ENCODE measurements at regions of chr15 and their contacts with region 1.

Region 1: GRCh38 chr15:52018693-52019387 is at the start of gene MAPK6:
- DNase-seq: peak; percentile 91
- H3K4me3 ChIP-seq: peak within 1 kb of the TSS; percentile 57 to 80 (median 76)
- H3K27ac ChIP-seq: peak within 1 kb of the TSS; percentile 99
- H3K4me1 ChIP-seq: peaks cover 16% of the 10 kb centered on the region
- H3K27me3 ChIP-seq: no peaks in the 10 kb centered on the region
- CTCF ChIP-seq: no peak
- total RNA-seq, gene MAPK6: 99.9 to 105 TPM

Region 2: DNA sequence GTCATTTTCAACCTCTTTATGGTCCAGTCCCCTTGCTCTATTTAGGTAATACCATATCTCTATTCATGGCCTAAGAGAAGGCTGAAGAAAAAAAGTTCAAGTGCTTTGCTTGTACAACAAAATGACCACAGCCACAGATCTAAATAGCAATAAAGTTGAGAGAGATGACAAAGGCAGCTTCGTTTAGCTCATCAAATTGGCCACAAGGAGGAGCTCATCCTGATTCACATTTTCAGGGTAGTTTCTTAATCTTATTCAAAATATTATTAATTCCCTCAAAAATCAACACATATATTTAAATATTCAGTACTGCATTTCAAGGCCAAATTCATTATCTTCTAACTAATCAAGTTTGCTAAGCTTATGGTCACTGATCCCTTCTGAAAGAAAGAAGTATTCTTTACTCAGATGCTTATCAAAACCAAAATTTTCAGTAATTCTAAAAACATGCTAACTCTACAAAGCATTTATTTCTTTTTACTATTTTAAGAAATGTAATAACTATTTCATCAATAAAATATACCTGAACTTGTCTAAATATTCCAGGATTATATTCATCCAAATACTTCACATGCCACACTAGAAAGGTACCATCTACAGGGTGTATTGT is 481.8 kb before region 1 on chr15:
- CTCF ChIA-PET with region 1: interaction called, 18 read pairs
- dilution Hi-C with region 1: no loop called
- in situ Hi-C with region 1: no loop called
- intact Hi-C with region 1: no loop called
- DNase-seq: no peak
- H3K4me3 ChIP-seq: no peak overlapping the region
- H3K27ac ChIP-seq: no peak overlapping the region
- H3K4me1 ChIP-seq: no peaks in the 10 kb centered on the region
- H3K27me3 ChIP-seq: no peaks in the 10 kb centered on the region
- CTCF ChIP-seq: peak; percentile 67 to 78

Region 3: DNA sequence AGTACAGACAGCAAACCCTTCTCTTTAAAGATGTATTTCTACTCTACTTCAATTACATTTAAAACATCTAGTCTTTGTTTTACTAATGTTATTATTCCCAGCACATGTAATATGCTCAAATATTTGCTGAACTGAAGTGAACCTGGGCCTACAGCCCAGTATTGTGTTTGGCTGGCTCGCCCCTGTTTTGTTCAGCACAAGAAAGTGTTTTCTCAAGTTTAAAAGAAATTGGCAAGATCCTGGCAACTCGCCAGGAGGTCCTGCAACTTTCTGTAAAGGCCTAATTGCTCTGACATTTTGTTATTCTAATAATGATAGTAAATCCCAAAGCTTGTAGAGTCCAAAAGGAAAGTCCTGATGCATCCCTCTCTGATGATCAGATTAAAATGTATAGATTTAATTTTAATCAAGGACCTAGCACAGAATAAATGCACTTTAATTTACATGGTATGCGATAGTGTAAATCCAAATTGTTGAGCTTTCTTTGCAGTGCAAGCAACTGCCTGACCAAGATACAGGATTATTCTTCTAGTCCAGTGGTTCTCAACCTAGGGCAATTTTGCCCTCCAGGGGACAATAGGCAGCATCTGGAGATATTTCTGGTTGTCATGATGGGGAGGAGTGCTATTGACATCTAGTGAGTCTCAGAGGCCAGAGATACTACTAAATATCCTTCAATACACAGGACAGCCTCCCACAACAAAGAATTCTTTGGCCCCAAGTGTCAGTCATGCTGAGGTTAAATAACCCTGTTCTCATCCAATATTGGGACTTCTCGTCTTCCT is 225.1 kb before region 1 on chr15:
- CTCF ChIA-PET with region 1: no interaction called
- dilution Hi-C with region 1: no loop called
- in situ Hi-C with region 1: no loop called
- intact Hi-C with region 1: no loop called
- DNase-seq: no peak
- H3K4me3 ChIP-seq: no peak overlapping the region
- H3K27ac ChIP-seq: no peak overlapping the region
- H3K4me1 ChIP-seq: no peaks in the 10 kb centered on the region
- H3K27me3 ChIP-seq: no peaks in the 10 kb centered on the region
- CTCF ChIP-seq: no peak

Region 4: DNA sequence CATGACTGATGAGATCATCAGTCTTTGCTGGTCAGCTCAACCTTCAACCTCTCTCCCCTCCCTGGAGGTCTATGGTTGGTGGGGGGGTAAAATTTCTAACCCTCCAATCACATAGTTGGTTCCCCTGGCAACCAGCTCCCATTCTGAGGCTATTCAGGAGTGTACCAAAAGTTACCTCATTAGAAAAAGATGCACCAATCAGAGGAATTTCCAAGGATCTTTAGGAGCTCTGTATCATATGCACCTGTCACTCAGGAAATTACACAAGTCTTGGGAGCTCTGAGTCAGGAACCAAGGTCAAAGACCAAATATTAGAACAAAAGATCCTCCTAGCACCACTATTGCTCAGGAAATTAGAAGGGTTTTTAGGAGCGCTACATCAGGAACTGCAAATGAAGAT is 25.9 kb before region 1 on chr15:
- CTCF ChIA-PET with region 1: no interaction called
- dilution Hi-C with region 1: loop called (anchors 5 kb)
- in situ Hi-C with region 1: no loop called
- intact Hi-C with region 1: loop called (anchors 1 kb)
- DNase-seq: peak; percentile 64
- H3K4me3 ChIP-seq: no peak overlapping the region
- H3K27ac ChIP-seq: no peak overlapping the region
- H3K4me1 ChIP-seq: peaks cover 32% of the 10 kb centered on the region
- H3K27me3 ChIP-seq: no peaks in the 10 kb centered on the region
- CTCF ChIP-seq: no peak

Region 5: GRCh38 chr15:52078876-52079700 is 60.2 kb after region 1 on chr15:
- CTCF ChIA-PET with region 1: no interaction called
- dilution Hi-C with region 1: no loop called
- in situ Hi-C with region 1: no loop called
- intact Hi-C with region 1: loop called (anchors 1 kb)
- DNase-seq: no peak
- H3K4me3 ChIP-seq: no peak overlapping the region
- H3K27ac ChIP-seq: peak overlapping the region; percentile 94
- H3K4me1 ChIP-seq: peaks cover 49% of the 10 kb centered on the region
- H3K27me3 ChIP-seq: no peaks in the 10 kb centered on the region
- CTCF ChIP-seq: peak; percentile 66 to 79

Region 6: GRCh38 chr15:52139599-52140491 is 121.0 kb after region 1 on chr15:
- CTCF ChIA-PET with region 1: no interaction called
- dilution Hi-C with region 1: no loop called
- in situ Hi-C with region 1: no loop called
- intact Hi-C with region 1: loop called (anchors 2 kb)
- DNase-seq: peak; percentile 50
- H3K4me3 ChIP-seq: no peak overlapping the region
- H3K27ac ChIP-seq: no peak overlapping the region
- H3K4me1 ChIP-seq: peaks cover 4% of the 10 kb centered on the region
- H3K27me3 ChIP-seq: no peaks in the 10 kb centered on the region
- CTCF ChIP-seq: peak; percentile 90 to 93